Heart right ventricle (tissue), 16 donors: ENCODE measurements at regions of chr12 and their contacts with region 1.

Region 1: GRCh38 chr12:56127888-56128669 is at the start of gene ESYT1:
- DNase-seq: peak; percentile 95 to 99
- ATAC-seq: peak; percentile 94 to 97 (median 96)
- H3K4me3 ChIP-seq: peak within 1 kb of the TSS; percentile 53 to 94 (median 84)
- H3K27ac ChIP-seq: peak within 1 kb of the TSS; percentile 51 to 94 (median 88)
- H3K4me1 ChIP-seq: peaks cover 8 to 61% (median 44%) of the 10 kb centered on the region in 9 donors
- H3K27me3 ChIP-seq: no peaks in the 10 kb centered on the region
- CTCF ChIP-seq: peak in 1 of 9 donors; percentile 18
- total RNA-seq, gene ESYT1: 28.8 to 47.5 (median 31.9) TPM

Region 2: DNA sequence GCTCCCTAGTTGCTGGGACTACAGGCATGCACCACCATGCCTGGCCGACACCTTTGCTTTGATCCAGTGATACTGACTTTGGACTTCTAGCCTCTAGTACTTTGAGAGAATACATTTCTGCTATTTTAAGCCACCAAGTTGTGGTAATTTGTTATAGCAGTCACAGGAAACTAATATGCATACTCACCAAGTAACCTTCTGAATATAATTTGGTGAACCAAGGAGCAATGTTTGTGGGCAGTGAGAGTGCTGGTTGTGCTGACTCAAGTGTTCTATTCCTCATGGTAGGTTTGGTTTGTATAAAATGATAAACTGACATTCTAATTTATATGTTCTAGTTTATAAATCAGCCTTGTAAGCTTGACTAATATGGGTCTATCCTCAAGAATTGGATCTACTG is 243.0 kb before region 1 on chr12:
- intact Hi-C with region 1: no loop called
- DNase-seq: no peak
- ATAC-seq: no peak
- H3K4me3 ChIP-seq: no peak overlapping the region
- H3K27ac ChIP-seq: no peak overlapping the region
- H3K4me1 ChIP-seq: no peaks in the 10 kb centered on the region
- H3K27me3 ChIP-seq: no peaks in the 10 kb centered on the region
- CTCF ChIP-seq: no peak

Region 3: DNA sequence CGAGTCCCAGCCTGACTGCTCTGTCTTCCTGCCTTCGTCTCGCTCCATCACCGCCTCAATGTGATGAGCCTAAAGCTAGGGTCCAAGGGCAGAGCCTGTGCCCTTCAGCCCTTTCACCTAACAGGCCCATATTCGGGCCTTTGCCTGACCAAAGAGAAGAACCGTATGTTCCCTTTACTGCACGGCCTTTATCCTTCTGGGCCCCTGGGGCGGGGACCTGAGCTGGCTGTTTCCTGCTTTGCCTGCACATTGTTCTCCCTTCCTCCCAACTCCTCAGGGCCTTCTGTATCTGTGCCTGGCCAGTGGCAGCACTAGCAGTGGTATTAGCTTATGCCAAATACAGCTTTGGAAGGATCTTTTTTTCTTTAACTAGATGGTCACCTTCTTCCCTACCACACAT is 15.8 kb after region 1 on chr12:
- intact Hi-C with region 1: loop called in 1 of 10 experiments (anchors 2 kb)
- DNase-seq: peak; percentile 46 to 58
- ATAC-seq: peak; percentile 30 to 90 (median 84)
- H3K4me3 ChIP-seq: no peak overlapping the region
- H3K27ac ChIP-seq: peak overlapping the region; percentile 68 to 91 (median 82)
- H3K4me1 ChIP-seq: peaks cover 8 to 55% (median 35%) of the 10 kb centered on the region in 9 donors
- H3K27me3 ChIP-seq: no peaks in the 10 kb centered on the region
- CTCF ChIP-seq: no peak

Region 4: GRCh38 chr12:56158029-56158925 is 30.2 kb after region 1 on chr12 and contains the start of gene MYL6:
- intact Hi-C with region 1: loop called in 8 of 10 experiments (anchors 1 to 5 kb)
- DNase-seq: peak; percentile 86 to 99
- ATAC-seq: peak; percentile 85 to 96 (median 93)
- H3K4me3 ChIP-seq: peak within 1 kb of the TSS; percentile 73 to 98 (median 91)
- H3K27ac ChIP-seq: peak within 1 kb of the TSS; percentile 93 to 99 (median 98)
- H3K4me1 ChIP-seq: peaks cover 20 to 53% (median 42%) of the 10 kb centered on the region in 9 donors
- H3K27me3 ChIP-seq: no peaks in the 10 kb centered on the region
- CTCF ChIP-seq: no peak
- total RNA-seq, gene MYL6: 355 to 1,188 (median 413) TPM

Region 5: GRCh38 chr12:56461235-56462159 is 333.4 kb after region 1 on chr12:
- intact Hi-C with region 1: loop called in 3 of 10 experiments (anchors 5 to 10 kb)
- DNase-seq: no peak
- ATAC-seq: no peak
- H3K4me3 ChIP-seq: no peak overlapping the region
- H3K27ac ChIP-seq: no peak overlapping the region
- H3K4me1 ChIP-seq: peaks cover 0 to 10% (median 4%) of the 10 kb centered on the region in 9 donors
- H3K27me3 ChIP-seq: no peaks in the 10 kb centered on the region
- CTCF ChIP-seq: no peak